ENCODE measurements at regions of chr4 and their contacts with region 1.

Region 1: GRCh38 chr4:73170507-73171167 is 88.0 kb downstream of the ANKRD17 start:
- DNase-seq: no peak
- ATAC-seq: no peak
- H3K4me3 ChIP-seq: no peak overlapping the region
- H3K4me3 Mint-ChIP-seq: no peak overlapping the region
- H3K27ac ChIP-seq: no peak overlapping the region
- H3K27ac Mint-ChIP-seq: peak overlapping the region in 1 of 9 donors; percentile 67
- H3K4me1 ChIP-seq: no peaks in the 10 kb centered on the region
- H3K4me1 Mint-ChIP-seq: peaks cover 10 to 41% (median 25%) of the 10 kb centered on the region in 7 donors
- H3K27me3 ChIP-seq: no peaks in the 10 kb centered on the region
- H3K27me3 Mint-ChIP-seq: no peaks in the 10 kb centered on the region

Region 2: DNA sequence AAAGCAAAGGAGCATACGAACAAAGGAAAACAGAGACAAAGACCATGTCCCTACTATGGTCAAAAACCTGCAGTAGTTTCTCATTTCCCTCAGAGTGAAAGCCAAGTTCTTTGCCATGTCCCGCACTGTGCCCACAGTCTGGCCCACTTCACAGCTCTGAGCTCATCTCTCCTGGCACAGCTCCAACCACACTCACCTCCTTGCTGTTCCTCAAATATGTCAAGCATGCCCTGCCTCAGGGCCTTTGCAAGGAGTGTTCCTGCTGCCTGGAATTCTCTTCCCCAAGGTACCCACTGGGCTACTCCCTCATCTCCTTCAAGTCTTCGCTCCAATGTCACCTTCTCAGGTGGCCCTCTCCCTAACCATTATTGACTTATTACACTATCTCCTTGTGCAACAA is 173.2 kb before region 1 on chr4:
- CTCF ChIA-PET with region 1: no interaction called
- POLR2A ChIA-PET with region 1: no interaction called
- intact Hi-C with region 1: no loop called
- DNase-seq: no peak
- ATAC-seq: no peak
- H3K4me3 ChIP-seq: no peak overlapping the region
- H3K4me3 Mint-ChIP-seq: no peak overlapping the region
- H3K27ac ChIP-seq: no peak overlapping the region
- H3K27ac Mint-ChIP-seq: peak overlapping the region in 1 of 9 donors; percentile 55
- H3K4me1 ChIP-seq: no peaks in the 10 kb centered on the region
- H3K4me1 Mint-ChIP-seq: no peaks in the 10 kb centered on the region
- H3K27me3 ChIP-seq: no peaks in the 10 kb centered on the region
- H3K27me3 Mint-ChIP-seq: peaks cover 6 to 13% (median 9%) of the 10 kb centered on the region in 5 donors

Region 3: GRCh38 chr4:74293558-74293957 is 1122.9 kb after region 1 on chr4:
- CTCF ChIA-PET with region 1: interaction called, 10 read pairs
- POLR2A ChIA-PET with region 1: no interaction called
- intact Hi-C with region 1: no loop called
- DNase-seq: no peak
- ATAC-seq: no peak
- H3K4me3 ChIP-seq: no peak overlapping the region
- H3K4me3 Mint-ChIP-seq: no peak overlapping the region
- H3K27ac ChIP-seq: no peak overlapping the region
- H3K27ac Mint-ChIP-seq: no peak overlapping the region
- H3K4me1 ChIP-seq: no peaks in the 10 kb centered on the region
- H3K4me1 Mint-ChIP-seq: no peaks in the 10 kb centered on the region
- H3K27me3 ChIP-seq: no peaks in the 10 kb centered on the region
- H3K27me3 Mint-ChIP-seq: peaks cover 0 to 4% (median 0%) of the 10 kb centered on the region in 5 donors

Measured in naive thymus-derived CD4-positive, alpha-beta T cell (primary cell).